HepG2 (cell line): ENCODE measurements at regions of chr20 and their contacts with region 1.

Region 1: DNA sequence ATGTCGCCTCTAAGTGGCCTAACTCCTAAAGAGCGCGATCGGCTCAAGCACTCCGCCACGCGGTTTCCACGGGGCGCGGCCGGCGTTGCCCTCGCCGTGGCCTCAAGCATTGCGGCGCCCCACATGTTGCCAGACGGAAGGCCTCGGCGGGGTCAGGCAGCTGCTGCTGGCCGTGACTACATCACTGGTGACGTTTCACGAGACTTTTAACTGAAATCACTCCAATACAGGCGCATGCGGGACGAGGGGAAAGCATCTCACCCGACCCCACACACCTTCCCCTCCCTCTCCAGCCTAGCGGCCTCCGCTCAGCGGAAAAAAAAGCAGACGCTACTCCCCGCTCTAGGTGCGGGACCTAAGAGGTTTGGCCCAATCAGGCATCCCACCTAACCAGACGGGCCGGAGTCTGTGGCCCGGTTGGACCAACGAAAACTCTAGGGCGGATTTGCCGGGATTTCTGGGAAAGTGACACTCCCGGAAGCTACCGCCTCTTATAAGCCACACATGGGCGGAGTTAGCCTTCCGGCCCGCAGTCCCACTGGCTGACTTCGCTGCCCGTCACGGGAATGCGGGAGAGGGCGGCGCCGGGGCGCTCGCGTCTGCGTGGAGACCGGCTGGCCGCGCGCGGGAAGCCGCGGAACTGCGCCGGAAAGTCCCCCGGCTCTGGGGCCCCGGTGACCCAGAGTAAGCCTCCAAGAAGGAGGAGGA is at the start of gene NXT1:
- DNase-seq: peak; percentile 100
- ATAC-seq: peak; percentile 92
- H3K4me3 ChIP-seq: peak within 1 kb of the TSS; percentile 80 to 91 (median 90)
- H3K27ac ChIP-seq: peak within 1 kb of the TSS; percentile 91
- H3K4me1 ChIP-seq: peaks cover 45% of the 10 kb centered on the region
- H3K27me3 ChIP-seq: no peaks in the 10 kb centered on the region; a peak in 1 of 5 replicates
- CTCF ChIP-seq: peak; percentile 45
- EP300 ChIP-seq: peak in 1 of 2 experiments; percentile 26; a peak in 1 of 4 replicates
- POLR2A ChIP-seq: peak; percentile 82 to 93
- RAD21 ChIP-seq: peak; percentile 46; the same call in 1 of the 2 replicates
- total RNA-seq, gene NXT1: 65.9 and 69.7 TPM in 2 replicates

Region 2: DNA sequence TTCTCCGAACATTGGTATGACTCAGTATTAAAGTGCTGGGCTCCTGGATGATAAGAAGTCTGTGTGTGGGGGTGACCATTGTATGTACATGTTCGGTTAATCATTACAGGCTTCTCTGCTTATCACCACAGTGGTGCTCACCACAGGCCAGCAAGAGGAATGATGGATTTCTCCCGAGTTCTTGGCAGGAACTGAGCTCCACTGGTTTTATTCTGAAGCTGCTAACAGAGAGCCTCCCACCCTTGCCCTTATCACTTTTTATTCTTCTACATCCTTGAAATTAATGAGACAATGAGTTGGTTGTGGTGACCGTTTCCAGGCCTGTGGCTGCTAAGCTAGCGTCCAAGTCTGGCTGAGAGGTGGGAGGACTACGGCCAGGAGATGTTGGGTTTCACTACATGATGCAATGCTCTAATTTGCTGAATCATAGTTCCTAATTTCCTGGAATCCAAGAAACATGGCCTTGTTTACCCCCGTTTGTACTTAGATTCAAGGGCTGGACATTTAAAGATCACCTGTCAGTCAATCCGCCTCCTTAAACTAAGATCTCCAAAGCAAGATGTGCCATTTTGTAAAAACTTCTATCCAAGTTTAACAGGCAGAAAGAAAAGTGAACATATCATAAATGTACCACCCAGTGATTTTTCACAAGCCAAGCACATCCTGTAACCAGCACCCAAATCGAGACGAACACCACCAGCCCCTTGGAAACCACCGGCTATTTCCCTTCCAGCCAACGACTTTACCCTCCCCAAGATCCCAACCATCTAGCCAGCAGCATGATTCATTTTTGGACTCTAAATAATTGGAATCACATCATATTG is 938.5 kb before region 1 on chr20:
- CTCF ChIA-PET with region 1: no interaction called
- POLR2A ChIA-PET with region 1: interaction called, 4 read pairs
- in situ Hi-C with region 1: no loop called
- intact Hi-C with region 1: loop called (anchors 10 kb)
- DNase-seq: peak; percentile 96
- ATAC-seq: peak; percentile 100
- H3K4me3 ChIP-seq: peak overlapping the region; percentile 17 to 56 (median 20); a peak in 4 of 6 replicates
- H3K27ac ChIP-seq: peak overlapping the region; percentile 77
- H3K4me1 ChIP-seq: peaks cover 57% of the 10 kb centered on the region
- H3K27me3 ChIP-seq: no peaks in the 10 kb centered on the region; a peak in 1 of 5 replicates
- CTCF ChIP-seq: 0 out of 2 replicates have a peak, but pooled peaks have one; percentile 4
- EP300 ChIP-seq: peak; percentile 51 to 89; a peak in 3 of 4 replicates
- POLR2A ChIP-seq: peak; percentile 69 to 73
- RAD21 ChIP-seq: no peak

Region 3: DNA sequence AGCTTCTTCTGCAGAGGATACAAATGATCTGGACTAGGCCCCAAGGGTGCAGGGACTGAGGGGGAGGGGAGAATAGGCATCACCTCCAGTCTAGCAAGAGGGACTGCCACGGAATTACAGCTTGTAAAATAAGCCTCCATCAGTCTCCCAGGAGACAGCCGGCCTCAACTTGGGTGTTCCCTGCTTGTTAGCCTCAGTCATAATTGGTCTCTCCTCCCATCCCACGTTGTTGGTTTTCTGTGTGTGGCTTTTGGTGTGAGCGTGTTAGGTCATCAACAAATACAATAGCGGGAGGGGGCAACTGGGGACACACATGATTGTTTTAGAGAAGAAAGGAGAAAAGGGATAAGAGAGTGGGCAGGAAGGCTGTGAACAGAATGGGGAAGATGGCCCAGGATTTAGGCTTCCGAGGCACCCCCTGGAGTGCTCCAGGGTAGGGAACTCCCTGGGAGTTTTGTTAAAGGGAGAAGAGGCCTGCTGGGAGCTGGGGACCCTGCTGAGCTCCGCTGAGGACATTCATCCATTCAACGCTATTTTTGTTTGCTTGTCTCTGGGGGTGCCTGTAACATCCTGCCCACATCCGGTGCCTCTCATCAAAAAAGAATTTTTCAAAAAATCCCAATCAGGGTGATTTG is 775.1 kb before region 1 on chr20:
- CTCF ChIA-PET with region 1: no interaction called
- POLR2A ChIA-PET with region 1: interaction called, 3 read pairs
- in situ Hi-C with region 1: loop called (anchors 10 kb)
- intact Hi-C with region 1: no loop called
- DNase-seq: peak; percentile 23
- ATAC-seq: no peak
- H3K4me3 ChIP-seq: peak overlapping the region in 2 of 3 experiments; percentile 32 to 95; a peak in 2 of 6 replicates
- H3K27ac ChIP-seq: peak overlapping the region; percentile 86
- H3K4me1 ChIP-seq: peaks cover 85% of the 10 kb centered on the region
- H3K27me3 ChIP-seq: no peaks in the 10 kb centered on the region; a peak in 1 of 5 replicates
- CTCF ChIP-seq: no peak
- EP300 ChIP-seq: no peak
- POLR2A ChIP-seq: no peak
- RAD21 ChIP-seq: no peak

Region 4: DNA sequence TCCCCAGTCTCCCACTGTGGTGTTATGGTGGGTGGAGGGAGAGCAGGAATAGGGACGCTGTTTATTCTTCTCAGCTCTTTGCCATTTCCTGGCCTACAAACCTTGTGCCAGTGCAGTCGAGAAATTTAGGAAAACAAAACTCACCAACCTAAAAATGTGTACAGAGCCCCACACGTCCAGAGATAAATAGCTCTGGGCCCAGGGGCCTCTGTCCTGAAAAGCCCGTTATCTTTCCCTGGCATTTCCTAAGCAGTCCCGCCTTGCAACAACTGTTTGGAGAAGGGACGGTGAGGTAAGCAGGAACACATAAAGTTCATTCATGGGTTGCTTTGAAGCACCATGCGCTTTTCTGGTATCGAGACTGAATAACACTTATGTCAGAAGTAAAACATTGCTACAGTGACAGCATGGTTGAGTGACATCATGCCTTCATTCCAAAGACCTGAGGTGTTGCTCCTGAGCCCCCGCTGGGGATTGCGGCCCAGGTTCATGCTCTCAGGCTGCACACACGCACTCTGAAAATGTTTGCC is 79.9 kb before region 1 on chr20:
- CTCF ChIA-PET with region 1: no interaction called
- POLR2A ChIA-PET with region 1: interaction called, 10 read pairs
- in situ Hi-C with region 1: no loop called
- intact Hi-C with region 1: no loop called
- DNase-seq: peak; percentile 98
- ATAC-seq: peak; percentile 85
- H3K4me3 ChIP-seq: peak overlapping the region in 1 of 3 experiments; percentile 25; a peak in 1 of 6 replicates
- H3K27ac ChIP-seq: peak overlapping the region; percentile 19
- H3K4me1 ChIP-seq: peaks cover 23% of the 10 kb centered on the region
- H3K27me3 ChIP-seq: 0 out of 5 replicates have a peak, but pooled peaks cover 0 to 4% of the 10 kb centered on the region in 2 experiments
- CTCF ChIP-seq: no peak
- EP300 ChIP-seq: peak in 1 of 2 experiments; percentile 72; a peak in 2 of 4 replicates
- POLR2A ChIP-seq: no peak
- RAD21 ChIP-seq: no peak

Region 5: DNA sequence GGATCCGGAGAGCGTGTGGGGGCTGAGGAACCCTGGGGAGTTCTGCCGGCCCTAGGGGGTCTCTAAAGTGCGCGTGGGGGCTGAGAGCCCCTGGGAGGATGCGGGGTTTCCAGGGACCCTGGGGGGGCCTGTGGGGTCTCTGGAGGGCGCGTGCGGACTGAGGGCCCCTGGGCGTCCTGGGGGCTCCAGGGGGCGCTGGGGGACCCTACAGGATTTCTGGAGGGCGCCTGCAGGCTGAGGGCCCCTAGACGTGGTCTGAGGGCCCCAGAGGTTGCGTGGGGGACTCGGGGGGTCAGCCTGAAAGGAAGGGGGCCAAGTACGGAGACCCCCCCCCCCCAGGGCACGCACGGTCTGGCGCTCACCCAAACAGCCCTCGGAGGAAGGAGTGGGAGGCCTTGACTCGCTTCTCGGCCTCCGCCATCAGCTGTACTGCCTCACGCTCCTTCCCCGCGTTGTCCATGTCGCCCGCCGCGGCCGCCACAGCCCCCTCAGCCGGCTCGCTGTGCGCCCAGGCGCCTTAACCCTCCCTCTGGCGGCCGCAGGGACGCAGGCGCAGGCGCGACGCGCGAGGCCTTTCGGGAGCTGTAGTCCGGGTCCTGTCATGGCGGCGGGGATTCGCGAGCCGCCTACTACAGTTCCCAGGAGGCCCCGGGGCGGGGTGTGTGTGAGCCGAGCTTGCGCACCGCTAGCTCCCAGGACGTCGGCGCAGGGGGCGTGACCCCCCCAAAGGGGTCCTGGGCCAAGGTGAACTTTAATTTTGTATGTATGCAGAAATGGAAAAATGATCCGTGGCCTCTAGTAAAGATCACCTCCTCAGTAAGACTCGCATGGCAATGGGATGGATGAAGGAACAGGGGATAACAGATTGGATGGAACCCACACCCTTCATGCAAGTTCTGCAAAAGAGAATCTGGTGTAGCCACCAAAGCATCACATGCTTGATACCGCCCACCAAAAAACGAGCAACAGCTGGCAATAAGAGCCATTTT is 70.9 kb after region 1 on chr20 and contains the start of gene NAPB:
- CTCF ChIA-PET with region 1: no interaction called
- POLR2A ChIA-PET with region 1: interaction called, 56 read pairs
- in situ Hi-C with region 1: no loop called
- intact Hi-C with region 1: loop called (anchors 5 kb)
- DNase-seq: peak; percentile 92
- ATAC-seq: peak; percentile 98
- H3K4me3 ChIP-seq: peak within 1 kb of the TSS; percentile 76 to 99 (median 93)
- H3K27ac ChIP-seq: peak within 1 kb of the TSS; percentile 66
- H3K4me1 ChIP-seq: peaks cover 62% of the 10 kb centered on the region
- H3K27me3 ChIP-seq: no peaks in the 10 kb centered on the region
- CTCF ChIP-seq: peak; percentile 53; the same call in 1 of the 2 replicates
- EP300 ChIP-seq: no peak; a peak in 1 of 4 replicates
- POLR2A ChIP-seq: peak; percentile 75 to 96
- RAD21 ChIP-seq: no peak
- total RNA-seq, gene NAPB: 9.5 and 15.2 TPM in 2 replicates

Region 6: GRCh38 chr20:23441850-23442313 is 91.5 kb after region 1 on chr20:
- CTCF ChIA-PET with region 1: interaction called, 3 read pairs
- POLR2A ChIA-PET with region 1: interaction called, 29 read pairs
- in situ Hi-C with region 1: no loop called
- intact Hi-C with region 1: loop called (anchors 1 kb)
- DNase-seq: peak; percentile 84
- ATAC-seq: peak; percentile 88
- H3K4me3 ChIP-seq: no peak overlapping the region
- H3K27ac ChIP-seq: no peak overlapping the region
- H3K4me1 ChIP-seq: peaks cover 19% of the 10 kb centered on the region
- H3K27me3 ChIP-seq: peaks cover 0 to 11% of the 10 kb centered on the region in 2 experiments; a peak in 2 of 5 replicates
- CTCF ChIP-seq: peak; percentile 99
- EP300 ChIP-seq: no peak
- POLR2A ChIP-seq: no peak
- RAD21 ChIP-seq: peak; percentile 89

Region 7: GRCh38 chr20:23655491-23656211 is 305.3 kb after region 1 on chr20:
- CTCF ChIA-PET with region 1: no interaction called
- POLR2A ChIA-PET with region 1: interaction called, 15 read pairs
- in situ Hi-C with region 1: no loop called
- intact Hi-C with region 1: loop called (anchors 2 kb)
- DNase-seq: no peak
- ATAC-seq: no peak
- H3K4me3 ChIP-seq: no peak overlapping the region
- H3K27ac ChIP-seq: no peak overlapping the region
- H3K4me1 ChIP-seq: peaks cover 89% of the 10 kb centered on the region
- H3K27me3 ChIP-seq: no peaks in the 10 kb centered on the region
- CTCF ChIP-seq: no peak
- EP300 ChIP-seq: no peak
- POLR2A ChIP-seq: no peak
- RAD21 ChIP-seq: no peak